CD4-positive, alpha-beta memory T cell (primary cell): ENCODE measurements at regions of chr19 and their contacts with region 1.

Region 1: DNA sequence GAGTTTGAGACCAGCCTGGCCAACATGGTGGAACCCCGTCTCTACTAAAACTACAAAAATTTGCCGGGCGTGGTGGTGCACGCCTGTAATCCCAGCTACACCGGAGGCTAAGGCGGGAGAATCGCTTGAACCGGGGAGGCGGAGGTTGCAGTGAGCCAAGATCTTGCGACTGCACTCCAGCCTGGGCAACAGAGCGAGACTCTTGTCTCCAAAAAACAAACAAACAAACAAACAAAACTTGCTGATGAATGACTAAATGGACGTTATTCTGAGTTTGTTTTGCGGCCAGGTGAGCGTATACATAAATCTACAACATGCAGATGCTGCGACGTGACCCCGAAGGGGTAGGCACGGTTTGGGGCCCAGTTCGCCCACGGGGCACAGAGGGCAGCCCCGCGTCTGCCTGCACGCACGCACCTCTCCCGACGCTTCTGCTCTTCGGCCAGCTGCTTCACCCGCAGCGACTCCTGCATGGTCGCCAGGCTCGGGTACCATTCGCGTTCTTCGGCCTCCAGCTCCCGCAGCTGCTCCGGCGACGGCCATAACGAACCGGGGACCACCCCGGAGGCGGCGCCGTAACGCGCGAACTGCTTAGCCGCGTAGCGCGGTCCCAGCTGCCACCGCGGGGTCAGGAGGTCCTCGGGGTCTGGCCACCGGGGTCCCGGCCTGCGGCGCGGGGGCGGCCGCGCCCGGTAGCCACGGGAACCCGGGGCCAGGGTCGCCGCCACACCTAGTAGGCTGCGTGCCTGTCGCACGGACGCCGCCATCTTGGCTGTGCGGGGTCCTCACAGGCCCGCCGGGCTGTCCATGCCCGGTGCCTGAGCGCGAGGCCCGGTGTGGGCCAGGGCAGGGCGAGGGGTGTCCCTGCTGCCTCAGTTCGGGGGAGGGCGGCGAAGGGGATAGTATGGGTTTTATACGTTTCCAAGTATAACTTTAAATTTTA is at the start of gene GADD45GIP1:
- DNase-seq: peak; percentile 76 to 83 (median 81)
- H3K4me3 ChIP-seq: peak within 1 kb of the TSS; percentile 45 to 79
- H3K4me3 Mint-ChIP-seq: peak within 1 kb of the TSS; percentile 88 to 93 (median 90)
- H3K27ac ChIP-seq: peak within 1 kb of the TSS; percentile 78
- H3K27ac Mint-ChIP-seq: peak within 1 kb of the TSS; percentile 91 to 94 (median 93)
- H3K4me1 ChIP-seq: peaks cover 28% of the 10 kb centered on the region
- H3K4me1 Mint-ChIP-seq: peaks cover 12 to 25% (median 21%) of the 10 kb centered on the region in 4 donors
- H3K27me3 ChIP-seq: no peaks in the 10 kb centered on the region
- H3K27me3 Mint-ChIP-seq: no peaks in the 10 kb centered on the region
- total RNA-seq, gene GADD45GIP1: 14.7 to 17.9 TPM

Region 2: DNA sequence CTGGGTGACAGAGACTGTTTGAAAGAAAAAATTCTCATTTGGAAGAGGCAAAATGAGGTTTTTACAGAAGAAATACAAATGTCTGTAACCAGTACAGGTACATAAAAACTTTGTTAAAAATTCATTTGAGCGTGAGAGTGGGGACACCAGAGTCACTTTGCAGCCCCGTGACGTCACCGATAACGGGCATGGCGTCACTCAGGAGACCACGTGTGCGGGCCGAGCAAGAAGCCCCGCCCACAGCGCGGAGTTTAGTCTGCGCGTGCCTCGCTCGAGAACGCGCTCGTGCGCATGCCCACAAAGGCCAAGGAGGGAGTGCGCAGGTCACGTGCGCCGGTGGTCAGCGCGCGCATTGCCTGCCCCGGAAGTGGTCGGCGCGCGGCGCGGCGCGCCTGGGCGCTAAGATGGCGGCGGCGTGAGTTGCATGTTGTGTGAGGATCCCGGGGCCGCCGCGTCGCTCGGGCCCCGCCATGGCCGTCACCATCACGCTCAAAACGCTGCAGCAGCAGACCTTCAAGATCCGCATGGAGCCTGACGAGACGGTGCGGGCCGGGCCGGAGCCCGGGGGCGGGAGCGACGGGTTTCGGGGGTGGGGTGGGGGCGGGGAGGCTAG is 11.1 kb before region 1 on chr19 and contains the start of gene RAD23A:
- CTCF ChIA-PET with region 1: no interaction called
- POLR2A ChIA-PET with region 1: interaction called, 7 read pairs
- intact Hi-C with region 1: loop called (anchors 1 kb)
- DNase-seq: peak; percentile 97 to 98 (median 98)
- H3K4me3 ChIP-seq: peak within 1 kb of the TSS in 1 of 2 donors; percentile 64
- H3K4me3 Mint-ChIP-seq: peak within 1 kb of the TSS; percentile 87 to 96 (median 90)
- H3K27ac ChIP-seq: peak within 1 kb of the TSS; percentile 78
- H3K27ac Mint-ChIP-seq: peak within 1 kb of the TSS; percentile 96 to 99 (median 97)
- H3K4me1 ChIP-seq: peaks cover 32% of the 10 kb centered on the region
- H3K4me1 Mint-ChIP-seq: peaks cover 15 to 57% (median 30%) of the 10 kb centered on the region in 4 donors
- H3K27me3 ChIP-seq: no peaks in the 10 kb centered on the region
- H3K27me3 Mint-ChIP-seq: peaks cover 0 to 2% of the 10 kb centered on the region in 2 donors
- total RNA-seq, gene RAD23A: 88.6 to 98.4 TPM